Sciatic nerve (tissue), 2 donors: ENCODE measurements at regions of chr7 and their contacts with region 1.

Region 1: DNA sequence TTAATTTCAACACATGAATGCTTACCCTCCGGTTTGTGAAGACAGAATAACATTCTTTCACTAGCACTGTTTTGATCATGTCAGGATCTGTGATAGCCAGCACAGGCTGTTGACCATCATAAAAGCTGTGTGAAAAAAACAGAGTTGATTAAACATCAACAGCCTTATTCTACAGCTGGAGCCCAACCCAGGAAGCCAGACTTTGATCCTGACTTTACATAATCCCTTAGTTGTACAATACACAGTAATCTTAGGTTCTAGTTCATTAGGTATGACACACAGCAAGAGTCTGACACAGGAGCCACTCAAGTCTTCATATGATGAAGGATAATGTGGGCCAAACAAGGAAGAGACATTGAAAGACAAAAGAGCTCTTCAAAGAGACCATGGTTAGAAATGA is 11.4 kb downstream of the CYP3A4 start:
- DNase-seq: no peak
- ATAC-seq: no peak

Region 2: GRCh38 chr7:98372993-98373392 is 1399.6 kb before region 1 on chr7:
- intact Hi-C with region 1: loop called (anchors 10 kb)
- DNase-seq: no peak
- ATAC-seq: no peak

Region 3: DNA sequence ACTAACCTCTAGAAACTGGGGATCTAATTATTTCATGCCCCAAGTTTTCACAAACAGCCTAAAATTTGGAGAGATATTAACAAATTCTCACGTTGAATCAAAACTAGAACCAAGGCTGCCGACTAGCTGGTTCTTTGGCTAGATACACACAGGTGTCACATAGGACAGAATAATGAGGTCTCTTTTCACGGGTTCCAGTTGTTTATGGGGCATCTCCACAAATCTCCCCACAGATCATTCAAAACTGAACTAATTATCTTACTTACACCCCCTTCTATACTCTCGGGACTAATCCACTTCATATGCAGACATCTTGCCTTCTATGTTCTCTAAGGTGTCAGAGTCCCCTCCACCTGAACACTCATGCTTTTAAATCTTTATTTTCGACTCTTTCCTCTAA is 120.7 kb after region 1 on chr7:
- intact Hi-C with region 1: no loop called
- DNase-seq: no peak
- ATAC-seq: no peak